Panc1 (cell line): ENCODE measurements at regions of chr12 and their contacts with region 1.

Region 1: GRCh38 chr12:96502477-96502876 is 13.1 kb downstream of the CFAP54 start:
- DNase-seq: no peak
- ATAC-seq: peak; percentile 45; the same call in 1 of the 2 replicates
- H3K4me3 ChIP-seq: no peak overlapping the region
- H3K27ac ChIP-seq: no peak overlapping the region
- H3K4me1 ChIP-seq: 0 out of 2 replicates have a peak, but pooled peaks cover 3% of the 10 kb centered on the region
- H3K27me3 ChIP-seq: no peaks in the 10 kb centered on the region
- CTCF ChIP-seq: no peak

Region 2: GRCh38 chr12:95838125-95838524 is 664.4 kb before region 1 on chr12:
- CTCF ChIA-PET with region 1: interaction called, 14 read pairs
- POLR2A ChIA-PET with region 1: no interaction called
- in situ Hi-C with region 1: no loop called
- intact Hi-C with region 1: no loop called
- DNase-seq: no peak
- ATAC-seq: 0 out of 2 replicates have a peak, but pooled peaks have one; percentile 33
- H3K4me3 ChIP-seq: peak overlapping the region in 1 of 2 experiments; percentile 52; a peak in 2 of 4 replicates
- H3K27ac ChIP-seq: no peak overlapping the region
- H3K4me1 ChIP-seq: peaks cover 13% of the 10 kb centered on the region
- H3K27me3 ChIP-seq: peaks cover 6% of the 10 kb centered on the region
- CTCF ChIP-seq: no peak

Region 3: GRCh38 chr12:98060411-98060810 is 1557.9 kb after region 1 on chr12:
- CTCF ChIA-PET with region 1: no interaction called
- POLR2A ChIA-PET with region 1: no interaction called
- in situ Hi-C with region 1: no loop called
- intact Hi-C with region 1: no loop called
- DNase-seq: no peak
- ATAC-seq: no peak
- H3K4me3 ChIP-seq: no peak overlapping the region
- H3K27ac ChIP-seq: no peak overlapping the region
- H3K4me1 ChIP-seq: no peaks in the 10 kb centered on the region
- H3K27me3 ChIP-seq: no peaks in the 10 kb centered on the region
- CTCF ChIP-seq: no peak